ENCODE measurements at regions of chr10 and their contacts with region 1.

Region 1: DNA sequence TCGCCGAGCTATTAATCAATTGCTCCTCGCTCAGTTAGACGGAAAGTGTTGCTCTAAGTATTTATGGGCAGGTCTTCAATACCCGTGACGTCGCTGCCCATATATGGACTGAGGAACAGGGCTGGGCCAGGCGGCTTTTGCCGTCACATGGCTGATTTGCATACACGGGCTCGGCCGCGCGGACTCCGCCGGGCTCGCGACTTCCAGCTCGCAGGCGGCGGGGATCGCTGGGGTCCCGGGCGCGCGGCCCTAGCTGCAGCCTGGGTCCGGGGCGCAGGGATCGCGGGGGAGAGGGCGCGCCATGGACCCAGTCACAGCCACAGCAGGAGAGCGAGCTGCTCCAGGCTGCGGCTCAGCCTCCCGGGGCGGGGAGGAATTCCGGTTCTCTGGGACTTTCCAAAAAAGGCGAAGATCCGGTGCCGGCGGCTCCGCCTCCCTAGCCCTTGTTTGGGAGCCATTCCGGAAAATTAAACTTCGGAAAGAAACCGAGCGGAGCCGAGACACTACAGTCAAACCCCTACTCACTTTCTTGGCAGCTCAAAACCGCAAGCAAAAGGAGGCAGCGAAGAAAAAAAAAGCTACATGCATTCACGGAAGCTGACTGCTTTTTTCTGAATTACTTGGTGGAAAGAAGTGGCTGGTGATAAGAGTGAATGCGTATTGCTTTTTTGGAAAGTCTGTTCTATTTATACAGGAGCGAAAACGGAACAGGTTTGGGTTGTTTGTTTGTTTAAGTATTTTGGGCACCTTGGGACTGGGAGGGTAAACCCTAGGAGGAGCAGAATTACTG is at the start of gene EGR2:
- DNase-seq: peak; percentile 97
- ATAC-seq: peak; percentile 81
- H3K4me3 Mint-ChIP-seq: peak within 1 kb of the TSS; percentile 83
- H3K27ac Mint-ChIP-seq: peak within 1 kb of the TSS; percentile 92
- H3K4me1 Mint-ChIP-seq: peaks cover 44% of the 10 kb centered on the region
- H3K27me3 Mint-ChIP-seq: peaks cover 76% of the 10 kb centered on the region
- total RNA-seq, gene EGR2: 4.7 to 21.6 TPM

Region 2: GRCh38 chr10:62610649-62611229 is 205.8 kb before region 1 on chr10:
- CTCF ChIA-PET with region 1: interaction called, 104 read pairs
- DNase-seq: peak; percentile 76
- ATAC-seq: peak; percentile 49
- H3K4me3 Mint-ChIP-seq: no peak overlapping the region
- H3K27ac Mint-ChIP-seq: no peak overlapping the region
- H3K4me1 Mint-ChIP-seq: peaks cover 28% of the 10 kb centered on the region
- H3K27me3 Mint-ChIP-seq: peaks cover 33% of the 10 kb centered on the region

Region 3: GRCh38 chr10:62732841-62733653 is 83.5 kb before region 1 on chr10:
- CTCF ChIA-PET with region 1: interaction called, 14 read pairs
- DNase-seq: peak; percentile 78
- ATAC-seq: peak; percentile 90
- H3K4me3 Mint-ChIP-seq: no peak overlapping the region
- H3K27ac Mint-ChIP-seq: no peak overlapping the region
- H3K4me1 Mint-ChIP-seq: peaks cover 21% of the 10 kb centered on the region
- H3K27me3 Mint-ChIP-seq: peaks cover 26% of the 10 kb centered on the region

Region 4: GRCh38 chr10:62831346-62831745 is 14.8 kb after region 1 on chr10:
- CTCF ChIA-PET with region 1: interaction called, 10 read pairs
- DNase-seq: no peak
- ATAC-seq: no peak
- H3K4me3 Mint-ChIP-seq: no peak overlapping the region
- H3K27ac Mint-ChIP-seq: no peak overlapping the region
- H3K4me1 Mint-ChIP-seq: no peaks in the 10 kb centered on the region
- H3K27me3 Mint-ChIP-seq: peaks cover 12% of the 10 kb centered on the region

Region 5: GRCh38 chr10:63286754-63287264 is 470.3 kb after region 1 on chr10:
- CTCF ChIA-PET with region 1: no interaction called
- DNase-seq: no peak
- ATAC-seq: no peak
- H3K4me3 Mint-ChIP-seq: no peak overlapping the region
- H3K27ac Mint-ChIP-seq: no peak overlapping the region
- H3K4me1 Mint-ChIP-seq: peaks cover 9% of the 10 kb centered on the region
- H3K27me3 Mint-ChIP-seq: no peaks in the 10 kb centered on the region

Measured in activated CD8-positive, alpha-beta memory T cell treated with anti-CD3 and anti-CD28 coated beads, Interleukin-2, amount 10 ng/mL, durations not matched to agents 7 days and 5 days (primary cell).